Naive thymus-derived CD4-positive, alpha-beta T cell (primary cell): ENCODE measurements at regions of chr1 and their contacts with region 1.

Region 1: GRCh38 chr1:185317034-185317885 is at the start of gene IVNS1ABP:
- DNase-seq: peak; percentile 91 to 97 (median 95)
- ATAC-seq: peak; percentile 88
- H3K4me3 ChIP-seq: peak within 1 kb of the TSS; percentile 95
- H3K4me3 Mint-ChIP-seq: peak within 1 kb of the TSS; percentile 92 to 100 (median 98)
- H3K27ac ChIP-seq: peak within 1 kb of the TSS; percentile 99
- H3K27ac Mint-ChIP-seq: peak within 1 kb of the TSS; percentile 96 to 99 (median 99)
- H3K4me1 ChIP-seq: peaks cover 31 to 42% of the 10 kb centered on the region in 2 donors
- H3K4me1 Mint-ChIP-seq: peaks cover 39 to 55% (median 46%) of the 10 kb centered on the region in 7 donors
- H3K27me3 ChIP-seq: no peaks in the 10 kb centered on the region
- H3K27me3 Mint-ChIP-seq: peaks cover 0 to 2% (median 0%) of the 10 kb centered on the region in 5 donors
- total RNA-seq, gene IVNS1ABP: 169 to 268 (median 193) TPM

Region 2: GRCh38 chr1:184805667-184806295 is 511.5 kb before region 1 on chr1:
- CTCF ChIA-PET with region 1: interaction called, 3 read pairs
- POLR2A ChIA-PET with region 1: no interaction called
- intact Hi-C with region 1: loop called in 1 of 2 experiments (anchors 2 kb)
- DNase-seq: peak; percentile 49 to 79 (median 68)
- ATAC-seq: peak; percentile 94
- H3K4me3 ChIP-seq: no peak overlapping the region
- H3K4me3 Mint-ChIP-seq: peak overlapping the region in 2 of 10 donors; percentile 2 to 27
- H3K27ac ChIP-seq: no peak overlapping the region
- H3K27ac Mint-ChIP-seq: peak overlapping the region in 2 of 9 donors; percentile 7 to 16
- H3K4me1 ChIP-seq: no peaks in the 10 kb centered on the region
- H3K4me1 Mint-ChIP-seq: peaks cover 4 to 6% (median 5%) of the 10 kb centered on the region in 7 donors
- H3K27me3 ChIP-seq: no peaks in the 10 kb centered on the region
- H3K27me3 Mint-ChIP-seq: no peaks in the 10 kb centered on the region

Region 3: GRCh38 chr1:185027252-185027882 is 289.9 kb before region 1 on chr1:
- CTCF ChIA-PET with region 1: no interaction called
- POLR2A ChIA-PET with region 1: no interaction called
- intact Hi-C with region 1: no loop called
- DNase-seq: no peak
- ATAC-seq: no peak
- H3K4me3 ChIP-seq: no peak overlapping the region
- H3K4me3 Mint-ChIP-seq: no peak overlapping the region
- H3K27ac ChIP-seq: no peak overlapping the region
- H3K27ac Mint-ChIP-seq: no peak overlapping the region
- H3K4me1 ChIP-seq: no peaks in the 10 kb centered on the region
- H3K4me1 Mint-ChIP-seq: no peaks in the 10 kb centered on the region
- H3K27me3 ChIP-seq: no peaks in the 10 kb centered on the region
- H3K27me3 Mint-ChIP-seq: peaks cover 12 to 26% (median 18%) of the 10 kb centered on the region in 5 donors

Region 4: GRCh38 chr1:185129708-185130107 is 187.6 kb before region 1 on chr1:
- CTCF ChIA-PET with region 1: no interaction called
- POLR2A ChIA-PET with region 1: no interaction called
- intact Hi-C with region 1: no loop called
- DNase-seq: no peak
- ATAC-seq: no peak
- H3K4me3 ChIP-seq: no peak overlapping the region
- H3K4me3 Mint-ChIP-seq: no peak overlapping the region
- H3K27ac ChIP-seq: no peak overlapping the region
- H3K27ac Mint-ChIP-seq: no peak overlapping the region
- H3K4me1 ChIP-seq: no peaks in the 10 kb centered on the region
- H3K4me1 Mint-ChIP-seq: peaks cover 0 to 5% (median 0%) of the 10 kb centered on the region in 7 donors
- H3K27me3 ChIP-seq: no peaks in the 10 kb centered on the region
- H3K27me3 Mint-ChIP-seq: no peaks in the 10 kb centered on the region

Region 5: GRCh38 chr1:185281245-185281644 is 36.0 kb before region 1 on chr1:
- CTCF ChIA-PET with region 1: interaction called, 7 read pairs
- POLR2A ChIA-PET with region 1: interaction called, 54 read pairs
- intact Hi-C with region 1: loop called in 1 of 2 experiments (anchors 1 kb)
- DNase-seq: peak in 7 of 9 donors; percentile 56 to 81 (median 72)
- ATAC-seq: peak; percentile 92
- H3K4me3 ChIP-seq: peak overlapping the region; percentile 11
- H3K4me3 Mint-ChIP-seq: peak overlapping the region; percentile 62 to 88 (median 75)
- H3K27ac ChIP-seq: peak overlapping the region; percentile 59
- H3K27ac Mint-ChIP-seq: peak overlapping the region; percentile 86 to 100 (median 96)
- H3K4me1 ChIP-seq: peaks cover 23 to 55% of the 10 kb centered on the region in 2 donors
- H3K4me1 Mint-ChIP-seq: peaks cover 40 to 75% (median 71%) of the 10 kb centered on the region in 7 donors
- H3K27me3 ChIP-seq: no peaks in the 10 kb centered on the region
- H3K27me3 Mint-ChIP-seq: no peaks in the 10 kb centered on the region

Region 6: GRCh38 chr1:185363205-185363604 is 45.9 kb after region 1 on chr1:
- CTCF ChIA-PET with region 1: no interaction called
- POLR2A ChIA-PET with region 1: no interaction called
- intact Hi-C with region 1: no loop called
- DNase-seq: no peak
- ATAC-seq: no peak
- H3K4me3 ChIP-seq: no peak overlapping the region
- H3K4me3 Mint-ChIP-seq: no peak overlapping the region
- H3K27ac ChIP-seq: no peak overlapping the region
- H3K27ac Mint-ChIP-seq: peak overlapping the region in 1 of 9 donors; percentile 48
- H3K4me1 ChIP-seq: no peaks in the 10 kb centered on the region
- H3K4me1 Mint-ChIP-seq: peaks cover 0 to 22% (median 0%) of the 10 kb centered on the region in 7 donors
- H3K27me3 ChIP-seq: no peaks in the 10 kb centered on the region
- H3K27me3 Mint-ChIP-seq: peaks cover 0 to 2% (median 0%) of the 10 kb centered on the region in 5 donors

Region 7: GRCh38 chr1:185420588-185421081 is 103.4 kb after region 1 on chr1:
- CTCF ChIA-PET with region 1: no interaction called
- POLR2A ChIA-PET with region 1: no interaction called
- intact Hi-C with region 1: loop called in 1 of 2 experiments (anchors 1 kb)
- DNase-seq: no peak
- ATAC-seq: peak; percentile 90
- H3K4me3 ChIP-seq: no peak overlapping the region
- H3K4me3 Mint-ChIP-seq: peak overlapping the region in 1 of 10 donors; percentile 71
- H3K27ac ChIP-seq: no peak overlapping the region
- H3K27ac Mint-ChIP-seq: peak overlapping the region in 3 of 9 donors; percentile 9 to 95 (median 42)
- H3K4me1 ChIP-seq: peaks cover 0 to 21% of the 10 kb centered on the region in 2 donors
- H3K4me1 Mint-ChIP-seq: peaks cover 0 to 69% (median 3%) of the 10 kb centered on the region in 7 donors
- H3K27me3 ChIP-seq: no peaks in the 10 kb centered on the region
- H3K27me3 Mint-ChIP-seq: no peaks in the 10 kb centered on the region

Region 8: GRCh38 chr1:185636848-185637247 is 319.6 kb after region 1 on chr1:
- CTCF ChIA-PET with region 1: no interaction called
- POLR2A ChIA-PET with region 1: no interaction called
- intact Hi-C with region 1: loop called in 1 of 2 experiments (anchors 1 kb)
- DNase-seq: peak in 1 of 9 donors; percentile 32
- ATAC-seq: peak; percentile 46
- H3K4me3 ChIP-seq: no peak overlapping the region
- H3K4me3 Mint-ChIP-seq: peak overlapping the region in 1 of 10 donors; percentile 50
- H3K27ac ChIP-seq: no peak overlapping the region
- H3K27ac Mint-ChIP-seq: peak overlapping the region in 1 of 9 donors; percentile 83
- H3K4me1 ChIP-seq: no peaks in the 10 kb centered on the region
- H3K4me1 Mint-ChIP-seq: peaks cover 0 to 21% (median 0%) of the 10 kb centered on the region in 7 donors
- H3K27me3 ChIP-seq: no peaks in the 10 kb centered on the region
- H3K27me3 Mint-ChIP-seq: peaks cover 0 to 6% (median 0%) of the 10 kb centered on the region in 5 donors

Region 9: DNA sequence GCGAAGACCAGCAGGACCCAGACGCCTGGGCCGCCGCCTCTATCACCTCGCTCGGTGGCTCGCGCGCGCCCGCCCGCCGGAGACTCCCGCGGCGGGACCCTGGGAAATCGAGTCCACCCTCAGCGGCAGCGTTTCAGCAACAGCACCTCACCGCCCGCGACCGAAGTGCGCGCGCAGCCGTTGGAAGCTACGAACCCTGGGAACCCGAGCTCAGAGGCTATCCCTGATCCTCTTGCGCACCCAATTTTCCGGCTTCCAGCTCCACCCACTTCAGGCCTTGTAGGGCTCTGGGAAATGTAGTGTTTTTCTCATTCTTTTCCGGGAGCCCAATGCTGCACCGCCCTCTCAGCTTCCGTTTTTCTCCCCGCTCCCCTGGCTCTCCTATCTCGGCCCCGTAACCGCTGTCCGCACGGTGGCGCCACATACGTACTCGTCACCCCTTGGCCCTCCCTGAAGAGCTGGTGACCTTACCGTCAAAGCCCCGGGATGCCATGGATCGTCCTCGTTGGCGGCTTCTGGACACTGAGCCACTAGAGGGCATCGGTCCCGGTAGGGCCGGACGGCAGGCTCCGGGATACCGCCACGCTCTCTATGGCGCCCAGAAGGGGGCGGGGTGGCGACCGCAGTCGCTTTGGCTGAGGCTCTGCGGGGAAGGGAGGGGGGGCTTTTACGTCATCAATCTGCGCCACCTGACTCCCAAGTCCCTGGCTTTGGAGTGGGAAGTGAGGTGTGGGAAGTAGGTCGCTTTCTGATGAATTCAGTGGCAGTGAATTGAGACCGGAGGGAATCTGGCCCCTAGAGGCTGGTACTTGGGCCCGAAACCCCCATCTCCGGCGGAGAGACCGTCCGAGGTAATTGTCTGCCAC is 1058.1 kb after region 1 on chr1 and contains the starts of genes ODR4 and TPR:
- CTCF ChIA-PET with region 1: no interaction called
- POLR2A ChIA-PET with region 1: no interaction called
- intact Hi-C with region 1: loop called (anchors 1 kb)
- DNase-seq: peak; percentile 92 to 98 (median 97)
- ATAC-seq: peak; percentile 88
- H3K4me3 ChIP-seq: peak within 1 kb of the TSS; percentile 98
- H3K4me3 Mint-ChIP-seq: peak within 1 kb of the TSS; percentile 90 to 99 (median 98)
- H3K27ac ChIP-seq: peak within 1 kb of the TSS; percentile 93
- H3K27ac Mint-ChIP-seq: peak within 1 kb of the TSS; percentile 91 to 99 (median 97)
- H3K4me1 ChIP-seq: peaks cover 24 to 25% of the 10 kb centered on the region in 2 donors
- H3K4me1 Mint-ChIP-seq: peaks cover 28 to 70% (median 54%) of the 10 kb centered on the region in 7 donors
- H3K27me3 ChIP-seq: no peaks in the 10 kb centered on the region
- H3K27me3 Mint-ChIP-seq: no peaks in the 10 kb centered on the region
- total RNA-seq, gene ODR4: 13.6 to 19.6 (median 18.3) TPM
- total RNA-seq, gene TPR: 118 to 195 (median 158) TPM